ENCODE measurements at regions of chr2 and their contacts with region 1.

Region 1: DNA sequence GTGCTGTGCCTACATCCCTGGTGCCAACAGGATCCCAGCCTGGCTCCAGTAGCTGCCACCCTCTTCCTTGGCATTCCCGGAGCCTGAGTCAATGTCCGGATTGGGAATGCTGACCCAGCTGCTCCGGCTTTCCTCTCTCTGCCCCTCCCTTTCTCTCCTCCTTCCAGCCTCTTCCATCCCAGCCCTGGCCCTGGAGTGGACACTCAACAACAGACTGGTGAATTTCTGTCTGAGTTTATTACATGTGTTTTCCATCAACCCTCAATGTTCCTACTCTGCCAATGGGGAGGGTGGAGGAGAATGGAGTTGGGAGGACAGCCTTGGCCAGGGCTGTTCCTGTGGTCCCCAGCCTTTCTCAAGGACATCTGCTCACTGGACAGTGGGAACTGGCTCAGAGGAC is 917 bp upstream of the PRKAG3 start:
- DNase-seq: peak; percentile 39 to 87
- H3K4me3 ChIP-seq: no peak overlapping the region
- H3K27ac ChIP-seq: peak overlapping the region; percentile 80 to 83
- H3K4me1 ChIP-seq: peaks cover 8 to 29% of the 10 kb centered on the region in 2 donors
- H3K27me3 ChIP-seq: no peaks in the 10 kb centered on the region
- CTCF ChIP-seq: no peak

Region 2: GRCh38 chr2:218733171-218734021 is 99.1 kb before region 1 on chr2:
- intact Hi-C with region 1: loop called (anchors 5 kb)
- DNase-seq: peak; percentile 46 to 71
- H3K4me3 ChIP-seq: no peak overlapping the region
- H3K27ac ChIP-seq: no peak overlapping the region
- H3K4me1 ChIP-seq: peaks cover 3 to 9% of the 10 kb centered on the region in 2 donors
- H3K27me3 ChIP-seq: no peaks in the 10 kb centered on the region
- CTCF ChIP-seq: no peak

Region 3: DNA sequence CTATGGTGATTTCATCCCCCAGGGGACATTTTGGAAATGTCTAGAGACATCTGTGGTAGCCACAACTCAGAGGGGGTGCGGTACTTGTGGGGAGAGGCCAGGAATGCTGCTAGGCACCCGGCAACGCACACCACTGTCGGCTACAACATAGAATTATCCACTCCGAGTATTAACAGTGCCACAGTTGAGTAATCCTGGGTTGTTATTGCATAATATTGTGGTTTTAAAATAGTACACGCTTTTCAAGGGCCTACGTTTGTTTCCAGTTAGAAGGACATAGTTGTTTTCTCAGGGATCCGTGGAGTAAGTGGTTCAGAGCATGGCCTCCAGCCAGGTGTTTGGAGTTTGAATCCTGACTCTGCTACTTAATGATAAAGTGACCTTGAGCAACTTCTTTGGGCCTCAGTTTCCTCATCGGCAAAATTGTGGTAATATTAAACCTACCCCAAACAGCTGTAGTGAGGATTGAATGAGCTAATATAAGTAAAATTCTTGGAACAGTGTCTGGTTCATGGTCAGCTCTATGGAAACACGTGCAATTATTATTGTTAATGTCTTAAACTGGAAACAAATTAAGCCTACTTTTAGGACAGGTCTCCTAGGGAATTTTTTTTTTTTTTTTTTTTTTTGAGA is 26.1 kb before region 1 on chr2:
- intact Hi-C with region 1: loop called (anchors 1 kb)
- DNase-seq: peak; percentile 75 to 95
- H3K4me3 ChIP-seq: peak overlapping the region; percentile 22 to 31
- H3K27ac ChIP-seq: peak overlapping the region; percentile 68 to 88
- H3K4me1 ChIP-seq: peaks cover 4 to 23% of the 10 kb centered on the region in 2 donors
- H3K27me3 ChIP-seq: no peaks in the 10 kb centered on the region
- CTCF ChIP-seq: no peak

Measured in ascending aorta (tissue), 2 donors.